GM12878 (cell line): ENCODE measurements at regions of chr9 and their contacts with region 1.

Region 1: DNA sequence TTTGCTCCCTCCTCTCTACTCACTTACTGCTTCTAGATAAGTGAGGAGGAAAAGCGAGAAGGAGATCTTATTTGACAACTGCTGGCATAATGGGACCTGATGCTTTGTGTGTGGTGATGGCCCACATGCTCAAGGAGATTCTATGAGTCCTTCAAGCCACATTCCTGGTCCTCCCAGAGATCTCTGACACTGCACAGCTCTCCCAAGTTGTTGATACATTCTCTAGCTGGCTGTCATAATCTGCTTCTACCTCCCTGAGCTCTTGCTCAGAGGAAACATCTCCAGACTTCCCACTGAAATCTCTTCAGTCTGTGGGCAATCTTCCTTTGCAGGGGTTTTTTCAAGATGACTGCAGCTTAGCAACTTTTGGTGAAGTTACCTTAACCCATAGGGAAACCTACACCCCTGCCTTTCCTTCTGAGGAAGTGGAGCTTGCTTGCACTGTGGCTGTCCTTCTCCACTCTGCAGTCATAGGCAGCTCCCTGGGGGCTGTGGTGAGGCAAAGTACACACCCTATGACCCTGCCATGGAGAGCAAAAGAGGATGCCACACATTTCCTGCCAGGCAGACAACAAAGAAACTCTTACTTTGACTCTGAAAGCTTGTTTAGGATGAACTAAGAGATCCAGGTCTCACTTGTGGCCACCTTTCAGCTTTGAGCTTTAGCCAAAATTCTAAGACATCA is 163.8 kb downstream of the TMEM38B start:
- DNase-seq: no peak
- ATAC-seq: peak; percentile 55
- H3K4me3 ChIP-seq: no peak overlapping the region
- H3K27ac ChIP-seq: no peak overlapping the region
- H3K4me1 ChIP-seq: no peaks in the 10 kb centered on the region
- H3K27me3 ChIP-seq: no peaks in the 10 kb centered on the region
- CTCF ChIP-seq: no peak
- EP300 ChIP-seq: no peak
- POLR2A ChIP-seq: no peak
- RAD21 ChIP-seq: no peak

Region 2: DNA sequence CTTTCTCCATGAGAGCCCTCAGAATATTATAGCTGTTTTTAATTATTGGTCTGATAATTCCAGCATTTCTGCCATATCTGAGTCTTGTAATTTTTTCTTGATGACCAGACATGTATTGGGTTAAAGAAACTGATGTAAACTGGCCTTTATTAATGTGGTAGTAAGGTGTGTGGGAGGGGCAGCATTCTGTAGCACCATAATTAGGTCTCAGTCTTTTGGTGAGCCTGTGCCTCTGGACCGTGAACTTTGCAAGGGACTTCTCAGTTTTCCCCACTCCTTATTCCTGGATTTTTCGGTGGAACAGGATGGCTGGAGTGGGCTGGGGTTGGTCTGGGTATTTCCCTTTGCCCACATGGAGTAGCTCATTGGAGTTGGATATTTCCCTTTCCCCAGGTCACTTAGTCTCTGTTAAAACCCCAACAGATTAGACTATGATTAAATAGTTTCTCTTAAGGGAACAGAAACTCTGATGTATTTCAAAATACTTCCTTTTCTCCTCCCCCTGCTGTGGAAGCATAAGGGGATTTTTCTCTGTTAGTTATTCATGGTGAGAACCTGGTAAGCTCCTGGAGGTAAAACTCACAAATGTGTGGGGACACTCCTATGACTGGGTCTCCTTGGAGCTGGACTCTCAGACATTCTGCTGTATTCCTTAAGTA is 357.9 kb before region 1 on chr9:
- CTCF ChIA-PET with region 1: no interaction called
- POLR2A ChIA-PET with region 1: no interaction called
- RAD21 ChIA-PET with region 1: no interaction called
- SMC1A ChIA-PET with region 1: no interaction called
- in situ Hi-C with region 1: no loop called
- intact Hi-C with region 1: no loop called
- DNase-seq: peak; percentile 62
- ATAC-seq: peak; percentile 75
- H3K4me3 ChIP-seq: peak overlapping the region; percentile 69
- H3K27ac ChIP-seq: peak overlapping the region; percentile 71
- H3K4me1 ChIP-seq: peaks cover 16% of the 10 kb centered on the region
- H3K27me3 ChIP-seq: no peaks in the 10 kb centered on the region
- CTCF ChIP-seq: no peak
- EP300 ChIP-seq: peak in 1 of 2 experiments; percentile 50; a peak in 1 of 4 replicates
- POLR2A ChIP-seq: no peak
- RAD21 ChIP-seq: peak; percentile 21; the same call in 1 of the 2 replicates

Region 3: DNA sequence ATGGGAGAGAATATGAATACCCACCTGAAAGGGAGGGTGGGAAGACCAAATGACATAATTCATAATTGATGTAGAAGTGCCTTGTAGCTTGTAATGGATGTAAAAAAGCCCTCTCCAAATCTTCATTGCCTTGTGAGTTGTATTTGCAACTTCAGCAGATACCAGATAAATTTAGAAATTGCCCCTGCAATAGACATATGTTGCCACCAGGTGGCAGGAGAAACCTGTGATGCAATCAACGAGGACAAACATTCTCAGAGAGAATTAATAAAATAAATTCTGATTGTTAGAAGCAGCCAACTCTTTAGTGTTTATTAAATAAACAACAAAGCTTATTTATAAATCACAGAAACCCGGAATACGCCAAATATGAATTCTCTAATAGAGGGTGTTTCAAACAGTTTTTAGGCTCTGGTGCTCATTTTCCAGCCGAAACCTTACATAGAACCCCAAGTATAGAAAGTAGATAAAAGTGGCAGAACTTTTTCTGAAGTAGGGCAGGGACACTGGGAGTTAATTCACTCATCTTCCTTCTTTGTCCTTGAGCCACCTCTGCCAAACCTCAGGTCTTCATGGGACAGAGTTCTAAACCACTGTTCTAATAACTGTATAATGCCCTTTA is 16.0 kb before region 1 on chr9:
- CTCF ChIA-PET with region 1: interaction called, 17 read pairs
- POLR2A ChIA-PET with region 1: no interaction called
- RAD21 ChIA-PET with region 1: no interaction called
- SMC1A ChIA-PET with region 1: interaction called, 3 read pairs
- in situ Hi-C with region 1: no loop called
- intact Hi-C with region 1: no loop called
- DNase-seq: peak; percentile 3
- ATAC-seq: 0 out of 3 replicates have a peak, but pooled peaks have one; percentile 36
- H3K4me3 ChIP-seq: no peak overlapping the region
- H3K27ac ChIP-seq: no peak overlapping the region
- H3K4me1 ChIP-seq: no peaks in the 10 kb centered on the region
- H3K27me3 ChIP-seq: no peaks in the 10 kb centered on the region
- CTCF ChIP-seq: peak; percentile 73 to 81 (median 73)
- EP300 ChIP-seq: no peak
- POLR2A ChIP-seq: no peak
- RAD21 ChIP-seq: peak; percentile 86

Region 4: GRCh38 chr9:106092083-106092482 is 233.9 kb after region 1 on chr9:
- CTCF ChIA-PET with region 1: no interaction called
- POLR2A ChIA-PET with region 1: no interaction called
- RAD21 ChIA-PET with region 1: no interaction called
- SMC1A ChIA-PET with region 1: no interaction called
- in situ Hi-C with region 1: no loop called
- intact Hi-C with region 1: no loop called
- DNase-seq: no peak
- ATAC-seq: no peak
- H3K4me3 ChIP-seq: no peak overlapping the region
- H3K27ac ChIP-seq: no peak overlapping the region
- H3K4me1 ChIP-seq: no peaks in the 10 kb centered on the region
- H3K27me3 ChIP-seq: no peaks in the 10 kb centered on the region
- CTCF ChIP-seq: no peak
- EP300 ChIP-seq: no peak
- POLR2A ChIP-seq: no peak
- RAD21 ChIP-seq: no peak